Adrenal gland (tissue), 19 donors: ENCODE measurements at regions of chr19 and their contacts with region 1.

Region 1: DNA sequence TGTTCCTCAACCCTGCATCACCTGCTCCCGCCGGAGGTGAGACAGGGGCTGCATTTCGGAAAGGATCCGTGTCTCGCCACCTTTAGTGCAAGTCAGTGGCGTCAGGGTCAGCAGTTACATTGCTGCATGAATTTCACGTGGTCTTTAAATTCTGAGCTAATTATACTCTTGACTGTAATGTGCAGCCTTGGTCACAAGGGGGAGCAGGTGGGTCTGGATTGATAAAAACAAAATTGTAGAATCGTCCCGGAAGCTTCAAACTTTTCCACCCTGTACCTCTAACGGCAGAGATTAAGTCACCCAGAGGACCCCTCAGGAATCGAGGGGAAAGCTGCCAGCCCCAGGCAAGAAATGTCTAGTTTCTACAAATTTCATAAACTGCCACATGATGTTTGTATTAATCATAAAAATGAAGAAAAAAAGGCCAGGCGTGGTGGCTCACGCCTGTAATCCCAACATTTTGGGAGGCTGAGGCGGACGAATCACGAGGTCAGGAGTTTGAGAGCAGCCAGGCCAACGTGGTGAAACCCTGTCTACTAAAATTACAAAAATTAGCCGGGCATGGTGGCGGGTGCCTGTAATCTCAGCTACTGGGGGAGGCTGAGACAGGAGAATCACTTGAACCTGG is 20.2 kb downstream of the BBC3 start:
- DNase-seq: peak; percentile 79 to 95 (median 89)
- H3K4me3 ChIP-seq: no peak overlapping the region
- H3K27ac ChIP-seq: peak overlapping the region in 1 of 5 donors; percentile 13
- H3K4me1 ChIP-seq: peaks cover 3 to 8% of the 10 kb centered on the region in 2 donors
- H3K27me3 ChIP-seq: no peaks in the 10 kb centered on the region
- CTCF ChIP-seq: peak; percentile 74 to 93 (median 88)
- POLR2A ChIP-seq: no peak

Region 2: GRCh38 chr19:47135156-47135555 is 75.6 kb before region 1 on chr19:
- intact Hi-C with region 1: loop called in 1 of 2 experiments (anchors 5 kb)
- DNase-seq: no peak
- H3K4me3 ChIP-seq: no peak overlapping the region
- H3K27ac ChIP-seq: no peak overlapping the region
- H3K4me1 ChIP-seq: peaks cover 0 to 30% of the 10 kb centered on the region in 2 donors
- H3K27me3 ChIP-seq: no peaks in the 10 kb centered on the region
- CTCF ChIP-seq: no peak
- POLR2A ChIP-seq: no peak

Region 3: GRCh38 chr19:47145639-47146486 is 64.9 kb before region 1 on chr19:
- intact Hi-C with region 1: loop called in 1 of 2 experiments (anchors 5 kb)
- DNase-seq: no peak
- H3K4me3 ChIP-seq: no peak overlapping the region
- H3K27ac ChIP-seq: no peak overlapping the region
- H3K4me1 ChIP-seq: peaks cover 7 to 12% of the 10 kb centered on the region in 2 donors
- H3K27me3 ChIP-seq: no peaks in the 10 kb centered on the region
- CTCF ChIP-seq: no peak
- POLR2A ChIP-seq: no peak

Region 4: DNA sequence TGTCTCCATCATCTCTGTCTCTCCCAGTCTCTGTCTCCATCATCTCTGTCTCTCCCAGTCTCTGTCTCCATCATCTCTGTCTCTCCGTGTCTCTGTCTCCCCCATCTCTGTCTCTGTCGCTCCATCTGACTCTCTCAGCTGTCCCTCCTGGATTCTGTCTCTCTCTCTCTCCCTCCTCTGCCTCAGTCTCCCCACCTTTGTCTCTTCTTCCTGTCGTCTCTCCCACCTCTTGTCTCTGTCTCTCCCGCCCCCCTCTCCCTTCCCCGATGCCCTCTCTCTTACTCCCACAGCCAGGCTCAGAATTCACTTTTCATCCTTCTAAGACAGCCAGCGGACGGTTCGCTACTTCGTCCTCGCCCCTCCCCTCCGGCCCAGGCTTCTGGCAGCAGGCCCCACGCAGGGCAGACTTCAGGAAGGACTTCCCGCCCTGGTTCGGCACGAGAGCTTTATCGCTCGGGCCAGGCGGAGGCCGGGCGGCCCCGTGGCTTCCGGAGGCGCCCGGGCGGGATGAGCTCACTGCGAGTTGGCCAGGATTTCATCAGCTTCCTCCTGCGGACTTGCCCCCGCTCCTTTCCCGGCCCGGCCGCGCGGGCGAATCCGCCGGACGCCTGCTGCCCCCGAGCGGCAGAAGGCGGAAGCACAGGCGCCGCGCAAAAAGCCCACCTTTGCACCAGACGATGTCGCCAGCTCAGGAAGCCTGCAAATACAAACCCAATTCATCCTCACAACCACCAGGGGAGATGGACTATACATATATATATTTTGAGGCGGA is 33.2 kb after region 1 on chr19:
- intact Hi-C with region 1: loop called (anchors 2 to 5 kb)
- DNase-seq: peak; percentile 91 to 96 (median 93)
- H3K4me3 ChIP-seq: peak overlapping the region in 1 of 4 donors; percentile 28
- H3K27ac ChIP-seq: peak overlapping the region in 3 of 5 donors; percentile 42 to 73 (median 68)
- H3K4me1 ChIP-seq: peaks cover 10 to 38% of the 10 kb centered on the region in 2 donors
- H3K27me3 ChIP-seq: peaks cover 8% of the 10 kb centered on the region
- CTCF ChIP-seq: peak; percentile 97 to 99 (median 98)
- POLR2A ChIP-seq: no peak